ENCODE measurements at regions of chr9 and their contacts with region 1.

Region 1: GRCh38 chr9:3136686-3137346 is 292.9 kb upstream of the PUM3 start:
- DNase-seq: peak; percentile 2
- H3K4me3 ChIP-seq: no peak overlapping the region
- H3K27ac ChIP-seq: no peak overlapping the region
- H3K4me1 ChIP-seq: no peaks in the 10 kb centered on the region
- H3K27me3 ChIP-seq: no peaks in the 10 kb centered on the region
- CTCF ChIP-seq: no peak

Region 2: DNA sequence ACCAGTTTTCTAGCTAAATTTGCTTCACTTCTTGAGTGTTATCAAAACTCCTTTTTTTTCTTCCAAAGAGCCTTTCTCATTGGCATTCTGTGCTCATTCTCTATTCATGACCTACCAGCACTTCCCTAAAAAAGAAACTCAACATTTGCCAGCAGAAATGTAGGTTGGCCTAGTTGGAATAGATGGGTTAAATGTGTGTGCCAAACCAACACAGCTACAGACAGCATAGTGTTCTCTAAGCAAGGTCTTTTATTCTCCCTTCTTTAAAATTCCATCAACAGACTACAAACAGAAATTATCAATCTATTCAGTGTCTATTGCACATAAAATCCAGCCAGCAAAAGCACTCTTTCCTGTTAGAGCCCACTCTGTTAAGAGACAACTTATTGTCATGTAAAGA is 37.2 kb before region 1 on chr9:
- CTCF ChIA-PET with region 1: no interaction called
- dilution Hi-C with region 1: loop called (anchors 5 kb)
- in situ Hi-C with region 1: no loop called
- intact Hi-C with region 1: no loop called
- DNase-seq: no peak
- H3K4me3 ChIP-seq: no peak overlapping the region
- H3K27ac ChIP-seq: no peak overlapping the region
- H3K4me1 ChIP-seq: no peaks in the 10 kb centered on the region
- H3K27me3 ChIP-seq: no peaks in the 10 kb centered on the region
- CTCF ChIP-seq: no peak

Measured in mammary epithelial cell (primary cell).